ENCODE measurements at regions of chr6 and their contacts with region 1.

Region 1: DNA sequence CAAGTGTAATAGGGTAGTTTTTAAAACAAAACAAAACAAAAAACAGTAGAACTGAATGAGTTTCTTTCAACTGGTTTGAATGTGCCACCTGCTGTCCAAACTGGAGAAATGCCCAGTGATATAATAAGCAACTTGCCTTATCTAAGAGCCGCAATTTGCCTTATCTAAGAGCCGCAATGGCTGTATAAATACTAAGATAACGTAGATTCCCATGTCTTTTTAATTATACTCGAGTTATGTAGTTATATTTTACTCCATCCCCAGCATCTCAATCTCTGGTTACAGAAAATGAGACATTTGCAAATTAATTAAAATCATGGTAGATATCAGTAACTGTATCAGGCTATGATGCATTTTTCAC is 67.2 kb downstream of the RPP40 start:
- DNase-seq: no peak
- H3K4me3 ChIP-seq: no peak overlapping the region
- H3K27ac ChIP-seq: no peak overlapping the region
- H3K4me1 ChIP-seq: peaks cover 0 to 68% (median 18%) of the 10 kb centered on the region in 6 donors
- H3K27me3 ChIP-seq: no peaks in the 10 kb centered on the region
- CTCF ChIP-seq: peak; percentile 16 to 74 (median 65)
- POLR2A ChIP-seq: no peak

Region 2: GRCh38 chr6:4281341-4282293 is 655.0 kb before region 1 on chr6:
- intact Hi-C with region 1: loop called (anchors 10 kb)
- DNase-seq: peak; percentile 85
- H3K4me3 ChIP-seq: peak overlapping the region in 7 of 8 donors; percentile 17 to 60 (median 27)
- H3K27ac ChIP-seq: no peak overlapping the region
- H3K4me1 ChIP-seq: peaks cover 0 to 13% (median 8%) of the 10 kb centered on the region in 6 donors
- H3K27me3 ChIP-seq: peaks cover 0 to 27% (median 4%) of the 10 kb centered on the region in 7 donors
- CTCF ChIP-seq: peak; percentile 24 to 64 (median 47)
- POLR2A ChIP-seq: no peak

Region 3: GRCh38 chr6:4788953-4789584 is 147.6 kb before region 1 on chr6:
- intact Hi-C with region 1: loop called (anchors 10 kb)
- DNase-seq: peak; percentile 87
- H3K4me3 ChIP-seq: peak overlapping the region in 1 of 8 donors; percentile 26
- H3K27ac ChIP-seq: peak overlapping the region in 3 of 8 donors; percentile 23 to 43 (median 29)
- H3K4me1 ChIP-seq: peaks cover 13 to 75% (median 43%) of the 10 kb centered on the region in 6 donors
- H3K27me3 ChIP-seq: no peaks in the 10 kb centered on the region
- CTCF ChIP-seq: peak in 8 of 11 experiments; percentile 12 to 59 (median 40)
- POLR2A ChIP-seq: no peak